HCT116 (cell line): ENCODE measurements at regions of chr10 and their contacts with region 1.

Region 1: DNA sequence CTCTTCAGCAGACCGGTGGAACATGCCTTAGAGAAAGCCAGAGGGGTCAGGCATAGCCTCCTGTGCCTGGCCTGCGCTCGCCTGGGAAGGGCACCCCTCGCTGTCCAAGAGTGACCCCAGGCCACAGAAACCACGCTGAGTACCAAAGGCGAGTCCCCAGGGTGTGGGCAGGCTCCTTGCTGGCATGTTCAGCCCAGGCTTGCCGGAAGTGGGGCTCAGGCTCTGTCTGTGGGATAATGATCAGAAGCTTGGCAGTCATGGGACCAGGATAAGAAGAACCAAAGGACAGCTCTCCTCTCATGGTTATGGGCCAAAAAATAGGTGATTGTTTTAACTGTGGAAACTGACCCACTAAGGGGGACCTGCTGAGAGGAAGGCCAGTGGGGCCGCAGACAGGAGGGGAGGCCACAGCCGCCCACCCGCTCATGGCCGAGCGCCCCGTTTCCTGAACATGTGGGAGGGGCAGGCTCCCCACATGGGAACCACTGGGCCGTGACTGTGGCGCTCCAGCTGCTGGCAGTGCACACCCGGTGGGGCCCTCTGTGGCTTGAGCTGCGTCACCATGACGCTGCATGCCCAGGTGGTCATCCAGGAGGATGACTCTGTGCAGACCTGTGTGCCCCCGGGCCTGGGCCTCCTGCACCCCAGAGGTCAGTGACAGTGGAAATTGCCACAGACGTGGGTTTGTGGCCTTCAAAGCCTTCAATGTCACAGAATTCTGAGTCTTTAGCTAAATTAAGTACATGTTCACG is 84.9 kb downstream of the MGMT start:
- DNase-seq: no peak
- ATAC-seq: no peak
- H3K4me3 ChIP-seq: no peak overlapping the region
- H3K27ac ChIP-seq: no peak overlapping the region
- H3K4me1 ChIP-seq: no peaks in the 10 kb centered on the region
- H3K27me3 ChIP-seq: no peaks in the 10 kb centered on the region
- CTCF ChIP-seq: no peak
- POLR2A ChIP-seq: no peak
- RAD21 ChIP-seq: no peak

Region 2: GRCh38 chr10:129491123-129491734 is 60.7 kb before region 1 on chr10:
- CTCF ChIA-PET with region 1: no interaction called
- POLR2A ChIA-PET with region 1: no interaction called
- RAD21 ChIA-PET with region 1: no interaction called
- intact Hi-C with region 1: loop called (anchors 2 kb)
- DNase-seq: peak; percentile 24
- ATAC-seq: no peak
- H3K4me3 ChIP-seq: no peak overlapping the region
- H3K27ac ChIP-seq: no peak overlapping the region
- H3K4me1 ChIP-seq: no peaks in the 10 kb centered on the region
- H3K27me3 ChIP-seq: no peaks in the 10 kb centered on the region
- CTCF ChIP-seq: no peak
- POLR2A ChIP-seq: no peak
- RAD21 ChIP-seq: no peak